Common myeloid progenitor, CD34-positive (primary cell): ENCODE measurements at regions of chr7 and their contacts with region 1.

Region 1: DNA sequence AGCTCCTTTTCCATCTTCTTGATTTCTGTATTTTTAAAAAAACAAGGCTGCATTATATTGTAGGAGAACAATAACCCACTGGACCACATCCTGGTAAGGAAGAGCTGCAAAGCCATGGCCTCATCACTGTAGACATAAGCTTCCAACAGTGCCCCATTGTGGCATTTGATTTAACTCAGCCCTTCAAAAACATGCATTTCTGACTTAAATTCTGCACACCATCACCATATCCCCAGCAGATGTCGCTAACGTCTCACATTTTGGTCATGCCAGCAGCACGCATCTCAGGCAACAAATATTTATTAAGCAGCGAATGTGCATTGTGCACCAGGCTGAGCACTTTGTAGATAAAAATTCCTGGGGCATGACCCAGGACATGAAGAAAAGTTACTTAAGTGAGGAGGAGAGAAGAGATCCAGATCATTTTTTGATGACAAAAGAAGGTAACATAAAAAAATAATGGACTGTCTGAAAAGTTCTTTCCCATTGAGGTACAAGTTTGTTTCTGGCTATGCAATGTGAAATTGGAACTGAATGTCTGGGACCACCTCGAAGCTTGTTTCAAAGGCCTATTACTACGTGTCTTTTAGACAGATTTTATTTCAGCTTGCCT is 164.6 kb upstream of the CDCA7L start:
- DNase-seq: peak; percentile 87 to 93 (median 87)
- H3K4me3 ChIP-seq: no peak overlapping the region
- H3K27ac ChIP-seq: no peak overlapping the region
- H3K4me1 ChIP-seq: no peaks in the 10 kb centered on the region
- H3K27me3 ChIP-seq: peaks cover 0 to 4% (median 0%) of the 10 kb centered on the region in 5 experiments

Region 2: GRCh38 chr7:22121702-22122474 is 11.6 kb after region 1 on chr7:
- CTCF ChIA-PET with region 1: interaction called, 21 read pairs
- POLR2A ChIA-PET with region 1: no interaction called
- DNase-seq: peak; percentile 81 to 90 (median 83)
- H3K4me3 ChIP-seq: peak overlapping the region in 2 of 7 experiments; percentile 21 to 51
- H3K27ac ChIP-seq: peak overlapping the region; percentile 25 to 44
- H3K4me1 ChIP-seq: peaks cover 5 to 19% (median 17%) of the 10 kb centered on the region in 4 experiments
- H3K27me3 ChIP-seq: no peaks in the 10 kb centered on the region

Region 3: GRCh38 chr7:22295402-22296264 is 185.3 kb after region 1 on chr7:
- CTCF ChIA-PET with region 1: interaction called, 18 read pairs
- POLR2A ChIA-PET with region 1: no interaction called
- DNase-seq: peak in 1 of 3 donors; percentile 22
- H3K4me3 ChIP-seq: no peak overlapping the region
- H3K27ac ChIP-seq: no peak overlapping the region
- H3K4me1 ChIP-seq: peaks cover 0 to 2% (median 0%) of the 10 kb centered on the region in 4 experiments
- H3K27me3 ChIP-seq: peaks cover 0 to 14% (median 0%) of the 10 kb centered on the region in 5 experiments

Region 4: DNA sequence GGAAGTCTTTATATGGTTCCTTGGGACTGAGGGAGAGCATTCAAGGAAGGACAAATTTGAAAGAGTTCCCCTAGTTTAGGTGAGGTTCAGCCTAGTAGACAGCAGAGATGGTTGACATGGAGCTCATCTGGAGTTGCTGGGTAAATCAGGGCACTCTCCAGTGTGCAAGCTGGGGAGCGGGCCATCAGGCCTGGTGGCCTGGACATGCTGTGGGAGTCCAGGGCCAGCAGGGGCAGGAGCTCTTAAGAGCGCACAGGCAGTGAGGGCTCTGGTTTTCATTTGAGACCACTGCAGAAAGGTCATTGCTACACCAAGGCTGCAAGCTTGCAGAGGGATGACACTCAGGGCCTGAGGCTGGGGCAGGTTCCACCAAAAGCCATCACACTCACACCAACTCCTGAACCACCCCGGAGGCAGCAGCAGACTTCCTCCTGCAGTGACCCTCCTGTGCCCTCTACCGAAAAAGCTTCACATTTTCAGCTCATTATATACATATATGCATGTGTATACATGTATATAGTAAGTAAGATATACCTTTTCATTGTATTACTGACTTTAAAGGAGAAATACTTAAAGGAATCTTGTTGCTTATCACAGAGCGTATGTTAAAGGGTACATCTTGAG is 350.1 kb after region 1 on chr7:
- CTCF ChIA-PET with region 1: interaction called, 11 read pairs
- POLR2A ChIA-PET with region 1: no interaction called
- DNase-seq: no peak
- H3K4me3 ChIP-seq: no peak overlapping the region
- H3K27ac ChIP-seq: no peak overlapping the region
- H3K4me1 ChIP-seq: no peaks in the 10 kb centered on the region
- H3K27me3 ChIP-seq: no peaks in the 10 kb centered on the region

Region 5: DNA sequence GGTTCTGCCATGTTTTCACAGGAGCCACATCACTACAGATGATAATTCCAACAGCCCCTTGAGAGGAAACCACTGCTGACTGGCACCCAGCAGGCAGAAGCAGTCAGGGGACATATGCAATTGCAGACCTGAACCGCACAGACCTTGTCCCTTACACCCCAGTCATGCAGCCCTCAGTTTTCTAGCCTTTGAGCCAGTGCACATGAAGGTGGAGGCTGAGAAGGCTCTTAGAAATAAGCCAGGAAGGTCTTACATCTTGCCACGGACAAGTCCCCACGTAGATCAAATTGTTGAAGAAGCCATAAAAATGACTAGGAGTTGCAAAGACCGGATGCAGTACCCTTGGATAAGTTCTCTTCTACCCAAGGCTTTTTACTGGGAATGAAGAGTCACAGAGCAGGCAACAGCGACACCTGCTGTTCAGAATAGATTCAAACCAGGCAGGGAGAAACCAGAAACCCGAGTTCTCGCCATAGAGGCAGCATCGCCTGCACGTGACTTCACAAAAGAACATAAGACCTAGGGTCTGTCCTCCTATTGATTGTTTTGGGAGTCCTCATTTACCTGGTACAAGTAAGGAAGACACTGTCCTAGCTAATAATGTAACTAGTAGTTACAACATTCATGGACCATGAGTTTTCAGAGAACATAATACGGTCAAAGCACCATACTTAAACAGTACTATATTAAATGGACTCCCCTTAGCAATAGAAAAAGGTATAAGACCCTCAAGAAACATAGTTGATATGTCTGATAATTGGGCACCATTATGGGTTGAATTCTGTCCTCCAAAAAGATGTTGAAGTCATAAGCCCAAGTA is 378.5 kb after region 1 on chr7:
- CTCF ChIA-PET with region 1: interaction called, 78 read pairs
- POLR2A ChIA-PET with region 1: no interaction called
- DNase-seq: peak; percentile 59 to 78 (median 61)
- H3K4me3 ChIP-seq: no peak overlapping the region
- H3K27ac ChIP-seq: no peak overlapping the region
- H3K4me1 ChIP-seq: no peaks in the 10 kb centered on the region
- H3K27me3 ChIP-seq: no peaks in the 10 kb centered on the region